MCF 10A (cell line): ENCODE measurements at regions of chr14 and their contacts with region 1.

Region 1: GRCh38 chr14:22570132-22570949 is 18.7 kb downstream of the DAD1 start:
- DNase-seq: peak; percentile 89
- H3K4me3 Mint-ChIP-seq: no peak overlapping the region
- H3K27ac Mint-ChIP-seq: peak overlapping the region; percentile 12
- H3K4me1 Mint-ChIP-seq: peaks cover 8% of the 10 kb centered on the region
- H3K27me3 Mint-ChIP-seq: no peaks in the 10 kb centered on the region
- CTCF ChIP-seq: peak; percentile 68

Region 2: GRCh38 chr14:21894003-21894897 is 676.1 kb before region 1 on chr14:
- CTCF ChIA-PET with region 1: no interaction called
- POLR2A ChIA-PET with region 1: no interaction called
- intact Hi-C with region 1: no loop called
- DNase-seq: peak; percentile 21
- H3K4me3 Mint-ChIP-seq: no peak overlapping the region
- H3K27ac Mint-ChIP-seq: no peak overlapping the region
- H3K4me1 Mint-ChIP-seq: no peaks in the 10 kb centered on the region
- H3K27me3 Mint-ChIP-seq: peaks cover 70% of the 10 kb centered on the region
- CTCF ChIP-seq: peak; percentile 26

Region 3: DNA sequence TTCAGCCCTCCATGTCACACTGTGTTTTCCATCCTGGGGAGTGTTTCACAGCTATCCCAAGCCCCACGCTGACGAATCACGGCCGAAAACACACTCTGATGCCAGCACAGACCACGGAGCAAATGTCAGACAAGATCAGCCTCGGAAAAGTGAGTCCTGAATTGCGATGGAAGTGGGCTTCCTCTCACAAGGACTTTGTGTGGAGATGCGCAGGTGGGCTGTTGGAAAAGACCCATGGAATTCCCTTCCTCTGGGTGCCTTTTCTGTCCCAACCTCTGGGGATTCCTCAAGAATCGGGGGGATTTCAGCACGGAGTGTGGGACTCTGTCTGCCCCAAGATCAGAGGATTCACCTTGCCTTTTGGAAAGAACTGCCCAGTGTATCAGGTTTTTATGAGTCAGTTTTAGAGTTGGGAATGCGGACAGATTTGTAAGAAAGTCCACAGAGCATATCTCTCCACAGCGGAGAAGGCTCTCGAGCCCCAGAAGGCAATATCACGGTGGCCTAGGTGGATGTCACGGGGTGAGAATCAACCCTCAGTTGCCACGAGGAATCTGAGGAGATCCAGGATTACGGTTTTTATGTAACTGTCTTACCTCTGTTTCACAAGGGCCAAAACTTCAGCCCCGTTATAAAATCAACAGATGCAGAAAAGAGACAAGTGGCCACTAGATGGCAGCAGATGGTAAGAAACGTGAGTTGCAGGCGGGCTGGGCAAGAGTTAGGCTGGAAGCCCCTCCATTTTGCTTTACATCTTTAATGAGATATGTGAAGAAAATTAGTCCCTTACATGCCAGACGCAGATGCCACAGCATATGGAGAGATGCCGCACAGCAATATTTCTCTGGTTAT is 183.2 kb before region 1 on chr14:
- CTCF ChIA-PET with region 1: interaction called, 14 read pairs
- POLR2A ChIA-PET with region 1: no interaction called
- intact Hi-C with region 1: no loop called
- DNase-seq: peak; percentile 79
- H3K4me3 Mint-ChIP-seq: no peak overlapping the region
- H3K27ac Mint-ChIP-seq: no peak overlapping the region
- H3K4me1 Mint-ChIP-seq: peaks cover 27% of the 10 kb centered on the region
- H3K27me3 Mint-ChIP-seq: no peaks in the 10 kb centered on the region
- CTCF ChIP-seq: peak; percentile 72

Region 4: DNA sequence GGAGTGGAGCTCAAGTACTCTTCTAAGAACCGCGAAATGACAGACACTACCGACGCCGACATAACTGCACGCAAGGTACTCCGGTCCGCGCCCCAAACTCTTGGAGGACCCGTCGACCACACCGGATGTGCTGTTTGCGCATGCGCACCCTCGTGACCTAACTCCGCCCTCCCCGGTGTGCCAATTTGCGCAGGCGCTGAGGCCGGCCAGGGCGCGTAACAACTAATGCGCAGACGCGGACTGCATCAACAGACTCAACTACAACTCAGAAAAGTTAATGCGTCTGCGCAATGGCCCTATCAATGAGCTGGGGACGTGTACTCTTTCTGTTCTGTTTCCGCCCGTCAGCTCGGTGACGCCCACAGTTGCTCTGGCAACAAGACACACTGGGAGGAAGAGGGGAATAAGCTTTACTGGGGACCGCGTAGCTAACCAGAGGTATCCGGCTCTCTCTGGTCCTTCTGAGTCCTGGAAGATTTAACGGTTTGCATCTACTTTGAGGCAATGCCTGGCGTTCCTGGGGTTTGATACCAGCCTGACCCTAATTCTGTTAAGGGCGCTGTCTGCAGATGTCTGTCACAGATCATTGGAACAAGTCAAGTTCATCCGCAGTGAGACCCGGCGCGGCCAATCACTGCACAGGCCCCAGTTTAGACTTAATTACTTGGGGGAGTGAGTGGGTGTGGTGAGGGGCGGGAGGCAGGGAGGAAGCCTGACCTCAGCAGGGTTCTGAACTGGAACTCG is 18.9 kb after region 1 on chr14 and contains the start of gene DAD1:
- CTCF ChIA-PET with region 1: interaction called, 58 read pairs
- POLR2A ChIA-PET with region 1: interaction called, 23 read pairs
- intact Hi-C with region 1: no loop called
- DNase-seq: peak; percentile 99
- H3K4me3 Mint-ChIP-seq: peak within 1 kb of the TSS; percentile 92
- H3K27ac Mint-ChIP-seq: peak within 1 kb of the TSS; percentile 96
- H3K4me1 Mint-ChIP-seq: peaks cover 21% of the 10 kb centered on the region
- H3K27me3 Mint-ChIP-seq: peaks cover 25% of the 10 kb centered on the region
- CTCF ChIP-seq: no peak
- total RNA-seq, gene DAD1: 166 and 210 TPM in 2 replicates

Region 5: DNA sequence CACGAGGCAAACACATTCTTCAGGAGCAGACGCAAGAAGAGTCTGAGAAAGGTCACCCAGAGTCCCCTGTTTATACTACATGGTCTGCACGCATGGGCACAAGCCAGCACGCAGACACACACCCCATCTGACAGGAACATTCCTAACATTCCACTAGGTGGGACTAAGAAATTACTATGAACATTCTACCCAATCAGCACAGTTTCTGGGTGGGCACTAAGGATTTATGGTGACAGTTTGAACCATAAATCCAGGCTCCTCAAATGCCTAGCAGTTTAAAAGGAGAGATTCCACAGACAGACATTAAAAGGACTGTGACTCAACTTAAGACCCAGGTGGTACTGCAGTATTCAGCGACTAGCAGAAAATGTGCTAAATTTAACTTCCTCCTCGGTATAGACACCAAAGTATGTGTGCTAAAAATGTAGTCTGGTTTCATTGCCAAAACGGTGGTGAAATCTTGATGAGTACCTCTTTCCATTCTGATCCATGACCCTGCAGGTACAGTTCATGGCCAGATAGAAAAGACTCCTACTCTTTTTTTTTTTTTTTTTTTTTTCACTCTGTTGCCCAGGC is 44.0 kb after region 1 on chr14:
- CTCF ChIA-PET with region 1: interaction called, 17 read pairs
- POLR2A ChIA-PET with region 1: no interaction called
- intact Hi-C with region 1: no loop called
- DNase-seq: peak; percentile 91
- H3K4me3 Mint-ChIP-seq: no peak overlapping the region
- H3K27ac Mint-ChIP-seq: peak overlapping the region; percentile 63
- H3K4me1 Mint-ChIP-seq: peaks cover 20% of the 10 kb centered on the region
- H3K27me3 Mint-ChIP-seq: no peaks in the 10 kb centered on the region
- CTCF ChIP-seq: no peak

Region 6: DNA sequence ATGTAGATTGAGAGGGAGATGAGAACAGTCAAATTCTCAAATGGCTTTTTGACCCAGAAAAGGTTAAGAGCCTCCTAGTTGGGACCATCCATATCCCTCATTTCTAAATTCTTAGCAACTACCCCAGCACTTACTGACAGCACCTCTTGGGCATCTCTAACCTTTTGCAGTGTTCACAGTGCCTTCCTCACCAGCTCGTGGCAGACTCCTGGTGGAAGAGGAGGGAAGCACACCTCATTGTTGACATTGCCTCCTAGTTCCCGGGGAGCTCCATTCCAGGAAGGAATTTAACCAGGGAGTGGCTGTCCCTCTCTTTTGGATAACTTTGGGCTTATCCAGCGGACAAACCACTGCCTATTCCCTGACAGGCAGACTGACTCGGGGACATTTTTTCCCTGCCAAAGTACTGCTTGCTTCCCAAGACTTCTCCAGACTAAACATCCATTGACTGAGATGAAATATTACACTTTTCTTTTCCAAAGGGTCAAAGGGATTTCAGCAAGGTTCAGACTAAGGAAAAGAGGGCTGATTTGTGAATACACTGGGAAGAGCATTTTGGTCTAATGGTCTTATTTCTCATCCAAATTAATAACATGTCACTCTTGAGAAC is 82.8 kb after region 1 on chr14:
- CTCF ChIA-PET with region 1: interaction called, 206 read pairs
- POLR2A ChIA-PET with region 1: interaction called, 22 read pairs
- intact Hi-C with region 1: loop called (anchors 1 kb)
- DNase-seq: peak; percentile 87
- H3K4me3 Mint-ChIP-seq: no peak overlapping the region
- H3K27ac Mint-ChIP-seq: no peak overlapping the region
- H3K4me1 Mint-ChIP-seq: peaks cover 10% of the 10 kb centered on the region
- H3K27me3 Mint-ChIP-seq: no peaks in the 10 kb centered on the region
- CTCF ChIP-seq: peak; percentile 84

Region 7: GRCh38 chr14:22713631-22713950 is 143.2 kb after region 1 on chr14:
- CTCF ChIA-PET with region 1: no interaction called
- POLR2A ChIA-PET with region 1: no interaction called
- intact Hi-C with region 1: loop called (anchors 1 kb)
- DNase-seq: no peak
- H3K4me3 Mint-ChIP-seq: peak overlapping the region; percentile 72
- H3K27ac Mint-ChIP-seq: no peak overlapping the region
- H3K4me1 Mint-ChIP-seq: no peaks in the 10 kb centered on the region
- H3K27me3 Mint-ChIP-seq: peaks cover 34% of the 10 kb centered on the region
- CTCF ChIP-seq: no peak